ENCODE measurements at regions of chr4 and their contacts with region 1.

Region 1: DNA sequence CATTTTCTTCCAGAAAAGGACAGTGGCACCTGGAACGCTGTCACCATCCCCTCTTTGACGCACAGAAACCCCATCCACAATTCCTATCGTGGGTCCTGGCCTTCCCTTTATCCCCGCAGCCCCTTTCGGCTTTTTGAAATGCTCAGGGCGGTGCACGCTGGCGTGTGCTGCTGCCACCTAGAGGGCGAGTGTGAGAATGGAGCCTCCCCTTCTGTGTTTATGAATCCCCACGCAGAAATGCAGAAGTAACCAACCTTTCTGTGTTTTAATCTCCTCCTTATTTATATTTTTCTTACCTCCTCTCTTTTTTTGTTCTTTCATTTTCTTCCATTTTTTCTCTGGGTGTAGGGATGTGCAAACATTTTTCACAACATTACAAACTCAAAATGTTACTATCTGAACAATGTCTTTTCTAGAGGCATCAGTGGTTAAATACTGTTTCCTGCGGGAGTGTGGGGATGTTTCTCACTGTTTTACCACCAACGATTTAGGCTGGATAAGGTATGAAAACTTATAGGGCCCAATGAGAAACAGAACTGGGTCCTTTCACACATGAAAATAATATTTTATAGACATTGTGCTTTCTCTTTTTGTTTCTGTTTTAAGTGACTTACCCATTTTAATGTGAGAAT is 50.0 kb downstream of the TMA16 start:
- DNase-seq: peak; percentile 58
- ATAC-seq: peak; percentile 11; the same call in 1 of the 2 replicates
- H3K4me3 ChIP-seq: peak overlapping the region; percentile 29; the same call in 1 of the 2 replicates
- H3K27ac ChIP-seq: no peak overlapping the region
- H3K4me1 ChIP-seq: peaks cover 36% of the 10 kb centered on the region
- H3K27me3 ChIP-seq: no peaks in the 10 kb centered on the region
- CTCF ChIP-seq: peak; percentile 85

Region 2: GRCh38 chr4:163048447-163048846 is 496.1 kb before region 1 on chr4:
- CTCF ChIA-PET with region 1: no interaction called
- POLR2A ChIA-PET with region 1: no interaction called
- intact Hi-C with region 1: loop called (anchors 1 kb)
- DNase-seq: peak; percentile 51
- ATAC-seq: peak; percentile 73
- H3K4me3 ChIP-seq: no peak overlapping the region
- H3K27ac ChIP-seq: no peak overlapping the region
- H3K4me1 ChIP-seq: no peaks in the 10 kb centered on the region
- H3K27me3 ChIP-seq: no peaks in the 10 kb centered on the region
- CTCF ChIP-seq: peak; percentile 64

Region 3: DNA sequence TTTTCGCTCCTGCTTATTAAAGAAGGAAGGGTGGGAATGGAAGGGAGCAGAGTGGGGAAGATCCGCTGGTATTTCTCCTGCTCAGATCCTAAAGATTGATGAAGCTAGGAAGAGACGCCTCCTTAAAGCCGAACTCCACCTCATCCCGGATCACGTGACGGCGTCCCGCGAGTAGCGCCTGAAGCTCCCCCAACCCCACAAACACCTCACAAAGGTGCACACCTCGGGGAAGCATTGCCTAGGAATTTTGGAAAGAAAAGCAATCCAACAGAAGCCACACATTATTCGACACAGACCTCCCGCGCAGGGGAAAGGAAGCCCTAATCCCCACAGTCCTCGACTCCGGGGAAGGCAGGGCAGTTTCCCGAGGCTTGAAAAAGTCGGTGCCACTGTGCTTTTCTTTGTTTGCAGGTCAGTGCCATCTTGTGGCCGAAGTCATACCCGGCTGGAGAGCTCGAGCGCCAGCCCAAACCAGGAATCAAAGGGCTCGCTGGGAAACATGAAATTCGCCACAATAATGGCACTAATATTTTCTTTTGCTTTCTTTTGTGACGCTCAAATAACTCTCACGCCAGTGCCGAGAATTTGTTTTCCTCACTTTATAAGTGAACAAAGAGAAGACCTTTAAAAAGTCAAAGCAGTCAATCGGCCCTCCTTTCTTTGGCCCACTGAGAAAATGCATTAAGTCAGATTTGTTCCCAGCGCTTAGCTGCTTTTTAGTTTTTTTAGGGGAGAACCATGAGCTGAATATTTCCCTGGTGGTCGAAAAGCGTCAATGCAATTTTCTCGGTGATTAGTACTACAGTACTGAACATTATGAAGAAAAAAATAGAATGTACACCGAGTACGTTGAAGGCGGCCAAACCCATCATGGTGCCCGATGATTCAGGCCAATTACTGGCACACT is 211.8 kb before region 1 on chr4 and contains the start of gene NPY1R:
- CTCF ChIA-PET with region 1: no interaction called
- POLR2A ChIA-PET with region 1: interaction called, 3 read pairs
- intact Hi-C with region 1: loop called (anchors 5 kb)
- DNase-seq: peak; percentile 70
- ATAC-seq: peak; percentile 80
- H3K4me3 ChIP-seq: peak within 1 kb of the TSS; percentile 76
- H3K27ac ChIP-seq: no peak within 1 kb of the TSS
- H3K4me1 ChIP-seq: no peaks in the 10 kb centered on the region
- H3K27me3 ChIP-seq: peaks cover 21% of the 10 kb centered on the region
- CTCF ChIP-seq: peak; percentile 76
- total RNA-seq, gene NPY1R: 1.3 and 1.7 TPM in 2 replicates

Region 4: DNA sequence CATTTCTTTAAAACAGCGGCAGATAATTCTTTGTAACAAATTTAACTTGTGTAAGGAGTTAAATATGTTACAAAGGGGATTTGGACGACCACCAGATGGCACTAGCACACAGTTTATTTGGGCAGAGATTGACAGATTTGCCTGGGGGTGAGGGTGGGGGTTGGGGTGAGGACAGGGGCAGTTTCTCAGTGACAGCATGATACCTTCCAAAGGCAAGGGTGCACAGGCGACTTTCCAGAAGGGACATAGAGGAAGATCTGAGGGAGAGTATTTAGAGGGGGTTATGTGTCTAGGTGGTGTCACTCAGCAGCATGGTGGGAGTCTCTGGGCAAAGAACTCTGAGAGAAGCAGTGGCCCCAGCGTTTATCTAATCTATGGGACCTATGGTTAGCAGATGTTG is 59.6 kb before region 1 on chr4:
- CTCF ChIA-PET with region 1: no interaction called
- POLR2A ChIA-PET with region 1: no interaction called
- intact Hi-C with region 1: loop called (anchors 1 kb)
- DNase-seq: peak; percentile 69
- ATAC-seq: no peak
- H3K4me3 ChIP-seq: no peak overlapping the region
- H3K27ac ChIP-seq: no peak overlapping the region
- H3K4me1 ChIP-seq: no peaks in the 10 kb centered on the region
- H3K27me3 ChIP-seq: no peaks in the 10 kb centered on the region
- CTCF ChIP-seq: peak; percentile 72